ENCODE measurements at regions of chr10 and their contacts with region 1.

Region 1: GRCh38 chr10:35355971-35356724 is 19.8 kb downstream of the CCNY start:
- DNase-seq: no peak
- H3K4me3 Mint-ChIP-seq: peak overlapping the region; percentile 71
- H3K27ac Mint-ChIP-seq: peak overlapping the region; percentile 93
- H3K4me1 Mint-ChIP-seq: peaks cover 67% of the 10 kb centered on the region
- H3K27me3 Mint-ChIP-seq: no peaks in the 10 kb centered on the region

Region 2: GRCh38 chr10:34121781-34122628 is 1234.1 kb before region 1 on chr10:
- intact Hi-C with region 1: loop called (anchors 5 kb)
- DNase-seq: peak; percentile 13
- H3K4me3 Mint-ChIP-seq: peak overlapping the region; percentile 17
- H3K27ac Mint-ChIP-seq: peak overlapping the region; percentile 86
- H3K4me1 Mint-ChIP-seq: peaks cover 27% of the 10 kb centered on the region
- H3K27me3 Mint-ChIP-seq: no peaks in the 10 kb centered on the region

Region 3: DNA sequence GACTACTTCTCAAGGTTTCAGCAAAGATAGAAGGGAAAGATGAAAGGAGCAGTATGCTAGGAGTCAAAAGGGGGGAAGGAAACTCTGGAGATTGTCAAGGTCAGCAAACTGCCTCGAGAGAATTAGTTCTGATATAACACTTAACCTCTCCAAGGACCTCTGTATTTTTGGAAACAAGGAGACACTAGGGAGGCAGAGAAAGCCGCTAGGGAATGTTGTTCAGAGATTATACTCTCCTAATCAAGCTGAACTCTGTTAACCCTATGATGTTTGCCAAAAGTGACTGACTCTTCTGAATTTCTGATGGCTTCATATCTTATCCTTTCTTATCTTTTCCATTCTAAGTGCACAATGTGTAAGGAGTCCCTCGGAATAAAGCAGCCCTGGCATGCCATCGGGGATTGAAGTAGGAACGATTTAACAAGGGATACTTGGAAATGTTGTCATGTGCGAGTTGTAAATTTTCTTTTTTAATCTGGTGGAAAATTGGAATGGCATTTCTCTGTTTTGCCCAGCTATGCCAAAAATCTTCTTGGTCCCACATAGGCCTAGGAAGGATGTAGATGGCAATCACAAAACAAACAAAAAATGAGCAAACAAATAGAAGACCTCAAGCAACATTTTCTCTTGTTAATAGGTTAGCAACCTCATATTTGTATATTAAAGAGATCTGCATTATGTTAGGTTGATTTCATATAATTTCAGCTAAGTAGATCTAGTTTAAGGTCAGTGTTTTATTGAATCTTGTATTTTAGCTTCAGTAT is 202.2 kb before region 1 on chr10:
- intact Hi-C with region 1: loop called (anchors 1 kb)
- DNase-seq: no peak
- H3K4me3 Mint-ChIP-seq: no peak overlapping the region
- H3K27ac Mint-ChIP-seq: no peak overlapping the region
- H3K4me1 Mint-ChIP-seq: peaks cover 44% of the 10 kb centered on the region
- H3K27me3 Mint-ChIP-seq: no peaks in the 10 kb centered on the region

Region 4: GRCh38 chr10:35341521-35341920 is 14.6 kb before region 1 on chr10:
- intact Hi-C with region 1: loop called (anchors 1 kb)
- DNase-seq: no peak
- H3K4me3 Mint-ChIP-seq: peak overlapping the region; percentile 25
- H3K27ac Mint-ChIP-seq: peak overlapping the region; percentile 64
- H3K4me1 Mint-ChIP-seq: peaks cover 72% of the 10 kb centered on the region
- H3K27me3 Mint-ChIP-seq: no peaks in the 10 kb centered on the region

Region 5: DNA sequence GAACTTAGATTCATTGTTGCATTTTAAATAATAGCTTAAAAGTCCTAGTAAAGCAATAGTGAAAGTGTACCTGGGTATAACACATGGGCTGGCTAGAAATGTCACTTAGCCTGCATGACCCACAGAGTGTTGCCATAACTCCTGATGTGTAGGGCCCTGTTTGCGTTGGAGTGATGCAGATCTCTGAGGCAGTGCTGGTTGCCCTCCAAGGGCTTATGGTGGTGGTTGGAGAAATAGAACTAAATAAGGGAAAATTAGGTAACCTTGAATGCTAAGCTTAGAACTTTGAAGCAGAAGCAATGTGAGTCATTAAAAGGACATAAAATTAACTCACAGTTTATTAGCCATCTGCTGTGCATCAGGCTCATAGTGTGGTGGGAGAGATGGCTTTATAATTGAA is 85.9 kb after region 1 on chr10:
- intact Hi-C with region 1: loop called (anchors 1 kb)
- DNase-seq: no peak
- H3K4me3 Mint-ChIP-seq: no peak overlapping the region
- H3K27ac Mint-ChIP-seq: peak overlapping the region; percentile 79
- H3K4me1 Mint-ChIP-seq: peaks cover 36% of the 10 kb centered on the region
- H3K27me3 Mint-ChIP-seq: peaks cover 2% of the 10 kb centered on the region

Region 6: DNA sequence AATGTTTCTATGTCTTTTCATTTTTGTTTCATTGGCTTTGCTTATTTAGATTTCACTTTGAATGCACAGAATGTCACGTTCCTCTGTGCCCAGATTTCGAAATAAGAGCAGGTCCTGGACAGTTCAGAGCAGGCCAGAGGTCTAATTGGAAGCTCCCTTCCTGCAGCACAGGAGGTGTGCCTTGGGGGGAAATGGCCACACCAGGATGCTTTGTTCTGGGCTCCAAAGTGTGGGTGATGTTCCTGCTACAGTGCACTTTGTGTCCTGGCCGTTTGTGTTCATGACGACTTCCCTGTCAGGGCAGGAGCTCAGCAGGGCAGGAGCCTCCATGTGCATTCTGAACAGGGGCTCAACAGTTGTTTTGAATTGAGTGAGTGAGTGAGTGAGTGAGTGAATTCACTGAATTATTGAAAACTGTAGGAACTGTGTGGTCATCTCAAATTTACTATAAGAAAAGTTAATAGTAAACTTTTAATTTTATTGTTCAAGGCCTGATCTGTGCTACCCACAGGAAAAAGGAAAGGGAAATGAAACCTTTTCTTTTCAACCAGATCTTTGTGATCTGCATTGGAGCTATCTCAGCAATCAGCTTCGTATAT is 139.5 kb after region 1 on chr10:
- intact Hi-C with region 1: no loop called
- DNase-seq: no peak
- H3K4me3 Mint-ChIP-seq: no peak overlapping the region
- H3K27ac Mint-ChIP-seq: no peak overlapping the region
- H3K4me1 Mint-ChIP-seq: peaks cover 30% of the 10 kb centered on the region
- H3K27me3 Mint-ChIP-seq: no peaks in the 10 kb centered on the region

Region 7: DNA sequence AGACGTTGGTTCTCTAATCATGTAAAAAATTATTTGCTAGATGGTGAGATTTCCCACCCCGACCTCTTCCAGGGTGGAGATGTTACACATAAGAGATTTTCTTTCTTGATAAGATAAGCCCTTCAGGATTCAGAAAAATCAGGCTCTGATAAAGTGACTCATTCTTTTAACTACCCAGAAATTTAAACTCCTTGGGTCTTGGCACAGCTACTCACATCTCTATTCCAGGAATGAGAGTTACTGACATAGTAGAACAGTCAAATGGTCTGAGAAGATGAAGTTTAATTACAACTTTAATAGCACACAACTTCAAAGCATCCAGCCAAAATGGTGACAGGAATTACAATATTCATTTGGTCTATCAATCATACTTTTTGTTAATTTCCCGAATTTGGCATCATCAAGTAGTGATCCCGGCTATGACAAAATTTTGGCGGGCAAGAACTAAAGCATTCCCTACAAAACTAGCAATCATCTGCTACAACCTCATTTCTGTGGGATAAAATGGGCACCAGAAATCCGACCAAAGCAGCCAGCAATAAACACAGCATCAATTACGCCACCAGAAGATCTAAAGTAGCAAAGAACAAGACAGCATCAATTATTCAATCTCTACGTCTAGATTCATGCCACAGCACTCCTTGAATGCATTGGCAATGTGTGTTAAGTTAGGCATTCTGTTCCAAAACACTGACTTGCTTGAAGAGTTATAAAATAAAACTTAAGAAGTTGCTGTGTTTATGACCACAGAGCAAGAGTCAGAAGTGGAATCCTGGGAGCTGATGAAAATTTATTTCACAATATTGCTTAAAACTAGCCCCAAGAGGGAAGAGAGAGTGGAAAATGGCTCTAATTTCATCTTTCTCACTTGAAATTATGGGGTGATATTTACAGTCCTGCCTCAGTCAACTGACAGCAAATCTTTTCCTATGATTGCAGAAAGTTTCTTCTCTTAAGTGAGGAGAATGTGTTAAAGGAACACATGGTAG is 1203.6 kb after region 1 on chr10:
- intact Hi-C with region 1: no loop called
- DNase-seq: no peak
- H3K4me3 Mint-ChIP-seq: no peak overlapping the region
- H3K27ac Mint-ChIP-seq: no peak overlapping the region
- H3K4me1 Mint-ChIP-seq: no peaks in the 10 kb centered on the region
- H3K27me3 Mint-ChIP-seq: no peaks in the 10 kb centered on the region